ENCODE measurements at regions of chr2 and their contacts with region 1.

Region 1: GRCh38 chr2:111667542-111668273 is 216.3 kb downstream of the ANAPC1 start:
- DNase-seq: peak; percentile 70 to 80
- H3K4me3 ChIP-seq: no peak overlapping the region
- H3K27ac ChIP-seq: no peak overlapping the region
- H3K4me1 ChIP-seq: peaks cover 5% of the 10 kb centered on the region
- H3K27me3 ChIP-seq: no peaks in the 10 kb centered on the region
- CTCF ChIP-seq: peak; percentile 2 to 39 (median 34)
- POLR2A ChIP-seq: no peak

Region 2: DNA sequence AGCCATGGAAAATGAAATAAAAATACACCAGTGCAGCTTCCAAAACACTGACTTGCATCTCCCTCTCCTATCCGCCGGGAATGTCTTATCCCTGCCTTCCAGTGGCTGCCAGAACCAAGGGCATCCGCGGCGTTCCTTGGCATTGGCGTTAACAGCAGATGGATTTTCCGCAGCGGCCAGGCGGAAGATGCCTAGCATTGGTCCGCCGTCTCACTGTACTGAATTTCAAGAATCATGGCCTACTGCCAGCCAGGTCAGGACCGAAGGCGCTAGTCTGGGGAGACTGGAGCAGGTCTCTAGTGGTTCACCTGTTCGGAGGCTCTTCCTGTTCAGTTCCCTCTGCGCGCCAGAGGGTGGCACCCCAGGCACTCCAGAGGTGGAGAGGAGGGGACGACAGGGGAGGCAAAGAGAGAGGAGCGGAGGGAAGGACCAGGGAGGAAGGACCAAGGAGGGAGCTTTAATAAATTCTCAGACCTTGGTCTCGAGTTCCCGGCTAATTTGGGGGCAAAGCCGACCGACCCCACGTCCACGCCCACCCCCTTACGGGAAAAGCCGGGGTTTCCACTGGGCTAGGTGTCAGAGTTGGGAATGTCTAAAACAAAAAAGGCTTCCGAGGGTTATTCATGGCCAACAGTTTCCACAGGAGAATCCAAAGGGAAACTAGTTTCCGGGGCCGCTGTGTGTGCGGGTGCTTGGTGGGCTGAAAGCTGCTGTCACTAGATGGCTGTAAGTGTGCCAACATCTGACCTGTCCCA is 550.7 kb before region 1 on chr2:
- intact Hi-C with region 1: loop called (anchors 10 kb)
- DNase-seq: no peak
- H3K4me3 ChIP-seq: peak overlapping the region; percentile 42 to 88
- H3K27ac ChIP-seq: peak overlapping the region; percentile 57
- H3K4me1 ChIP-seq: peaks cover 44% of the 10 kb centered on the region
- H3K27me3 ChIP-seq: no peaks in the 10 kb centered on the region
- CTCF ChIP-seq: peak; percentile 62 to 94 (median 84)
- POLR2A ChIP-seq: no peak

Region 3: GRCh38 chr2:111632661-111633060 is 35.0 kb before region 1 on chr2:
- intact Hi-C with region 1: no loop called
- DNase-seq: no peak
- H3K4me3 ChIP-seq: no peak overlapping the region
- H3K27ac ChIP-seq: no peak overlapping the region
- H3K4me1 ChIP-seq: no peaks in the 10 kb centered on the region
- H3K27me3 ChIP-seq: no peaks in the 10 kb centered on the region
- CTCF ChIP-seq: no peak
- POLR2A ChIP-seq: no peak